ENCODE measurements at regions of chr9 and their contacts with region 1.

Region 1: DNA sequence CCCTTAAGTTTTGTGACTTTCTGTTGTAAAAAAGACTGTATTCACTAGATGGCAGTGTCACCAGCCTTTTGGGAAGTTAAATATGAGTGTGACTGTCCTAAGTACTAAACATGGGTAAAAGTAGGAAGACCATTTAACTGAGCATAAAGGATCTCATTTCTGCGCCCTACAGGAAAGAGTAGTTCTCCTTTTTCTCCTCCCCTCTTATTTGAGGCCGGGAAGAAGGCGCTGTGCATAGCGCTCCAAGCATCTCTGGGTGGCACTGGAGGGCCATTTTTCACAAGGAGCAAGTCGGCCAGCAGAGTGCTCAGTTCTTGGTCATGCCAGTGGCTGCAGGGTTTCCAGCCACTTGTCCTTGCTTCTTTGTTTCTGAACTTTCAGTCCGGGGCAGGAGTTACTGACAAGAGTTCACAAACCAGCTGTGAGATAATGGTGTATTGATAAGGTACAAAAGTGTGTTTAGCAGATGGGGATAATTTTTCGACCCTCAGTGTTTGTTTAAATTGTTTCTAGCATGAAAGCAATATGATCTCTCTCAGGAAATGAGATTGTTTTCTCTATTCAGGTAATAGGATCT is 227.6 kb upstream of the DMRT1 start:
- DNase-seq: no peak
- H3K4me3 ChIP-seq: peak overlapping the region in 1 of 4 donors; percentile 18
- H3K27ac ChIP-seq: peak overlapping the region; percentile 25 to 77 (median 60)
- H3K4me1 ChIP-seq: peaks cover 7 to 54% (median 19%) of the 10 kb centered on the region in 3 donors
- H3K27me3 ChIP-seq: no peaks in the 10 kb centered on the region
- CTCF ChIP-seq: peak; percentile 72 to 89 (median 84)
- POLR2A ChIP-seq: no peak

Region 2: DNA sequence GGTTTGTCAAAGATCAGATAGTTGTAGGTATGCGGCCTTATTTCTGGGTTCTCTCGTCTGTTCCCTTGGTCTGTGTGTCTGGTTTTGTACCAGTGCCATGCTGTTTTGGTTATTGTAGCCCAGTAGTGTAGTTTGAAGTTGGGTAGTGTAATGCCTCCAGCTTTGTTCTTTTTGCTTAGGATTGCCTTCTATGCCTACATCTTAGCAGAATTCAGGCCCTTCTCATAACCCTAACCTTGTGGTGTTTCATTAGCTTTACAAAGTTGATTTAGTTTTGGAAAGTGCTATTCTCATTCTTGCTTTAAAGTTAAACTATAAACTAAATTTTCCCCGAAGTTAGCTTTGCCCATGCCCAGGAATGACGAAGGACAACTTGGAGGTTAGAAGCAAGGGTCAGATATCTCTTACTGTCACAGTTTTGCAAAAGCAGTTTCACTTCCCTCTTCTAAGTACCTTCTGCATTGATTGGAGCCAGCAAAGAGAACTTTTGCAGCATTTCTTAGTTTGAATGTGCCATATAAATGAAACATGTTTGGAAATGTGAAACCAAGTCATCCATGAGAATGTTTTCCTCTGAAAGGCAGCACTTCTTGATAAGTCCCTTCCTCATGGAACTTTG is 46.6 kb before region 1 on chr9:
- intact Hi-C with region 1: no loop called
- DNase-seq: no peak
- H3K4me3 ChIP-seq: no peak overlapping the region
- H3K27ac ChIP-seq: no peak overlapping the region
- H3K4me1 ChIP-seq: peaks cover 0 to 24% (median 3%) of the 10 kb centered on the region in 3 donors
- H3K27me3 ChIP-seq: no peaks in the 10 kb centered on the region
- CTCF ChIP-seq: no peak
- POLR2A ChIP-seq: no peak

Region 3: DNA sequence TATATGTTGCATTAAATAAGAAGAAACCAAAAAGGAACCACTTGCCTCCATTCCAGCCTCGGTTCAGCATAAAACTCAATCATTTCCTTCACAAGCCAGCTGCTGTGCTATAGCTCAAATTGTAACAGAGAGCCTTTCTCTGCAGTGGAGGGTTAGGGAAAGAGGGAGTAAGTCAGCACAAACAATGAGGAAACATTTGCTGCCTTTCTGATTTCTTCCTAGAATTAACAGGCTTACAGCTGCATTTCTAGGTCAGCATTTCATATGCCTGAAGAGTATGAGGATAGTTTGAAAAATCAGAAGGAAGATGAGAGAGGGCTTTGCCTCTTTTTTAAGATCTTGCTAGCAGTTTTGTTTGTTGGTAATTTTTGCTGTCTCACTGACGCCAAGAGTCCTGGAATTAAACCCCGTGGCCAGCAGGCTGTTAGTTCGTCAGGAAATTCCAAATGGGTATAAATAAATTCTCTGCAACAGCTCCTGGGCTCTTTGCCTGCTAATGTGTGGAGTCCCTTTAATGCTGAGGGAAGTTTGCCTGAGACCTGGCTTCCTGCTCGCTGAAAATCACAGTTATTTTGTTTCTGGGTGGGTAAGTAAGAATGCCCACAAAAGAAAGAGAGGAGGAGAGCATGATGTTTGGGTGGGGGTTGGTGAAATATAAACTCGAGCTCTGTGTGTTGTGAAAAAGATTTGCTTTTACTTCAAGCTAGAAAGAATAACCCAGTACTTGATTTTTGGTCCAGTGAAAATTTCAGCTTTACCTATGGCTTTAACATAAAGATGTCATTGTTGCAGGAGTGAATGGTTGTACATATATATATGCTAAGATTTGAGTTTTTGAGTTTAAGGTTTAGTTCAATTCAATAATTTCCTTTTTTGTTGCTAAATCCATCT is 79.6 kb after region 1 on chr9:
- intact Hi-C with region 1: loop called (anchors 10 kb)
- DNase-seq: no peak
- H3K4me3 ChIP-seq: peak overlapping the region in 3 of 4 donors; percentile 14 to 56 (median 21)
- H3K27ac ChIP-seq: peak overlapping the region; percentile 75 to 95 (median 92)
- H3K4me1 ChIP-seq: peaks cover 27 to 100% (median 84%) of the 10 kb centered on the region in 3 donors
- H3K27me3 ChIP-seq: no peaks in the 10 kb centered on the region
- CTCF ChIP-seq: peak in 1 of 6 experiments; percentile 5
- POLR2A ChIP-seq: peak in 1 of 4 donors; percentile 29

Region 4: DNA sequence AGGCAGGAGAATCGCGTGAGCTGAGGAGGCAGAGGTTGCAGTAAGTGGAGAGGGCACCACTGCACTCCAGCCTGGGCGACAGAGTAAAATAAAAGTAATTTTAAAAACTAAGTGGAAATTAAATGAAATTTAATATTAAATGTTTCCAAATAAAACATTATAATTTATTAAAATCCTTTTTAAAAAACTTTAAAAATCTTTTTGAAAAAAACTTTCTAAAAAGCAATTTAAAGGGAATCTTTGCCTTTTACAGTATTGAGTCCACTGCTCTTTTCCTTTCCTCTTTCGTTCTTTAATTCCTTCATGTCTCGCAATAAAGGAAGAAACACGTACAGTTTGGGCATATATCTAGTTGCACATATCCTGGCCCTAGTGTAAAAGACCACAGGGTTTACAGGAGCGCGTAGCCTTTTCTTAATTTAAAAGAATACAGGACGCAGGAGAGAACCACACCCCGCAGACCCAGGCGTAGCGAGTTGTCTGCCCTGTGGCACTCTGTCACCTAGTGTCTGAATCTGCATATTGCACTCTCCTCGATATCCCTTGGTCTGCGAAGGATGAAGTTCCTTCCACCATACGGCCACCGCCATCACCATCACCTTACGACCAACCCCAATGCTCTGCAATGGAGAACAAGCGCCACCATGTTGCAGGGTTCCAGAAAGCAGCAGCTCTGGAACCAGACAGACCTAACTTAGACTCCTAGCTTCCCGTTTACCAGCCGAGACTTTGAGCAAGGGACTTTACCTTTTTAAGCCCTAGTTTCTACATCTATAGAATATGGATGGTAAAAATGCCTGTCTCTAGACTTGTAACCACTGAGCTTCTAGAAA is 150.0 kb after region 1 on chr9:
- intact Hi-C with region 1: loop called (anchors 5 kb)
- DNase-seq: no peak
- H3K4me3 ChIP-seq: peak overlapping the region in 3 of 4 donors; percentile 10 to 51 (median 19)
- H3K27ac ChIP-seq: no peak overlapping the region
- H3K4me1 ChIP-seq: peaks cover 3 to 43% (median 4%) of the 10 kb centered on the region in 3 donors
- H3K27me3 ChIP-seq: no peaks in the 10 kb centered on the region
- CTCF ChIP-seq: peak; percentile 65 to 96 (median 92)
- POLR2A ChIP-seq: no peak

Region 5: GRCh38 chr9:882478-882877 is 268.6 kb after region 1 on chr9:
- intact Hi-C with region 1: no loop called
- DNase-seq: no peak
- H3K4me3 ChIP-seq: no peak overlapping the region
- H3K27ac ChIP-seq: no peak overlapping the region
- H3K4me1 ChIP-seq: no peaks in the 10 kb centered on the region
- H3K27me3 ChIP-seq: peaks cover 0 to 48% (median 0%) of the 10 kb centered on the region in 4 donors
- CTCF ChIP-seq: no peak
- POLR2A ChIP-seq: no peak